Activated CD4-positive, alpha-beta memory T cell treated with anti-CD3 and anti-CD28 coated beads, Interleukin-2, amount 10 ng/mL, durations not matched to agents 7 days and 5 days (primary cell): ENCODE measurements at regions of chr6 and their contacts with region 1.

Region 1: DNA sequence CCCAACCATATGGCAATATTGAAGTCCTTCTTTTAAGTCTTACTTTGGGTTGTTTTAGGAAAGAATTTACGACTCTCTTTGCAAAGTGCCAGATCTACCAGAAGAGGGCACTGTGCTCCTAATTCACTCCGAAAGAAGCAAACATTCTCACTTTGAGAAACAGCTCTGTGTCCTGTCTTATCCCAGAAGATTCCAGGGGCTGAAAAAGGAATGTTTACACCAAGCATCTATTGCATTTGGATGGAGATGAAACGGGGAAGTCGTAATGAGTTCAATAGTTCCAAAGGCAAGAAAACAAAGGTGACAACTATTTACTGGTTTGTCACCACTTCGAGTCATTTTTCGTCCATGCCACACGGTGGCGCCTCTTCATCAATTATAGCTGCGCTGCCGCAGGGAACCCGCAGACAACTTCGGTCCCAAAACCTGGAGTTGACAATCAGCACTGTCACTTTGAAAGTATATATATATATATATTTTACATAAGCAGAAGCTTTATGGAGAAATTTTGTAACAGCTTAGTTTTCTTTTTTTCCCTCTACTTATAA is 121.6 kb downstream of the MOXD1 start:
- DNase-seq: peak; percentile 73
- H3K4me3 Mint-ChIP-seq: peak overlapping the region; percentile 64
- H3K27ac Mint-ChIP-seq: no peak overlapping the region
- H3K4me1 Mint-ChIP-seq: no peaks in the 10 kb centered on the region
- H3K27me3 Mint-ChIP-seq: peaks cover 24% of the 10 kb centered on the region

Region 2: GRCh38 chr6:131914967-131915751 is 364.5 kb before region 1 on chr6:
- CTCF ChIA-PET with region 1: interaction called, 12 read pairs
- POLR2A ChIA-PET with region 1: no interaction called
- DNase-seq: peak; percentile 59
- H3K4me3 Mint-ChIP-seq: no peak overlapping the region
- H3K27ac Mint-ChIP-seq: no peak overlapping the region
- H3K4me1 Mint-ChIP-seq: peaks cover 22% of the 10 kb centered on the region
- H3K27me3 Mint-ChIP-seq: peaks cover 56% of the 10 kb centered on the region

Region 3: GRCh38 chr6:132265451-132266097 is 14.1 kb before region 1 on chr6:
- CTCF ChIA-PET with region 1: interaction called, 54 read pairs
- POLR2A ChIA-PET with region 1: no interaction called
- DNase-seq: no peak
- H3K4me3 Mint-ChIP-seq: no peak overlapping the region
- H3K27ac Mint-ChIP-seq: no peak overlapping the region
- H3K4me1 Mint-ChIP-seq: no peaks in the 10 kb centered on the region
- H3K27me3 Mint-ChIP-seq: peaks cover 8% of the 10 kb centered on the region

Region 4: DNA sequence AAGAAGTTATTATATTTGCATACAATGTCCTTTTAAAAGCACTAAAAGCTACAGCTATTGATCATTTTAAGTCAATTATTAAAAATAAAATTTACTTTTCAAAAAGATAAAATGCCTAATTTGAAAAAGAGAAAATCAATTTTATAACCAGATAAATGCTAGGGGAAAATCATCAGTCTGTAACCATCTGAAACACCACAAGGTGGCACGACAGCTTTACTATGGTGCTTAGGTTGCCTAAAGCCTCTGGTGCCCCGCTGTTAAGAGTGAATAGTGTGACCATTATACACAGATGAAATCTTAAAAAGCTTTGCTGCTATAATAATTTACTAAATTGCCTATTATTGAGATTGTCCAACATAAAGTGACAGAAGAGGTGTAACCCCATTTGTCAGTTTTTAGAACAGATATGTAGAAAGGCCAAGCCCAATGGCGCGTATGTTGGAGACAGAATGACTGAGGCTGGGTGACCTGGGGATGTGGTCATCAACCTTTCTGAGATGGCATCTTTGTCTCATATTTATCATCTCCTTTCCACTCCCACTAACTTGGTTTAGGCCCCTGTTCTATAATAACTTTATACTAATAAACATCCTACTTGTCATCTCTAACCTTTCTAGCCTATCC is 20.8 kb after region 1 on chr6:
- CTCF ChIA-PET with region 1: interaction called, 112 read pairs
- POLR2A ChIA-PET with region 1: interaction called, 6 read pairs
- DNase-seq: no peak
- H3K4me3 Mint-ChIP-seq: no peak overlapping the region
- H3K27ac Mint-ChIP-seq: no peak overlapping the region
- H3K4me1 Mint-ChIP-seq: no peaks in the 10 kb centered on the region
- H3K27me3 Mint-ChIP-seq: peaks cover 19% of the 10 kb centered on the region

Region 5: GRCh38 chr6:132483779-132484679 is 204.4 kb after region 1 on chr6:
- CTCF ChIA-PET with region 1: interaction called, 161 read pairs
- POLR2A ChIA-PET with region 1: no interaction called
- DNase-seq: peak; percentile 33
- H3K4me3 Mint-ChIP-seq: no peak overlapping the region
- H3K27ac Mint-ChIP-seq: no peak overlapping the region
- H3K4me1 Mint-ChIP-seq: peaks cover 22% of the 10 kb centered on the region
- H3K27me3 Mint-ChIP-seq: no peaks in the 10 kb centered on the region

Region 6: DNA sequence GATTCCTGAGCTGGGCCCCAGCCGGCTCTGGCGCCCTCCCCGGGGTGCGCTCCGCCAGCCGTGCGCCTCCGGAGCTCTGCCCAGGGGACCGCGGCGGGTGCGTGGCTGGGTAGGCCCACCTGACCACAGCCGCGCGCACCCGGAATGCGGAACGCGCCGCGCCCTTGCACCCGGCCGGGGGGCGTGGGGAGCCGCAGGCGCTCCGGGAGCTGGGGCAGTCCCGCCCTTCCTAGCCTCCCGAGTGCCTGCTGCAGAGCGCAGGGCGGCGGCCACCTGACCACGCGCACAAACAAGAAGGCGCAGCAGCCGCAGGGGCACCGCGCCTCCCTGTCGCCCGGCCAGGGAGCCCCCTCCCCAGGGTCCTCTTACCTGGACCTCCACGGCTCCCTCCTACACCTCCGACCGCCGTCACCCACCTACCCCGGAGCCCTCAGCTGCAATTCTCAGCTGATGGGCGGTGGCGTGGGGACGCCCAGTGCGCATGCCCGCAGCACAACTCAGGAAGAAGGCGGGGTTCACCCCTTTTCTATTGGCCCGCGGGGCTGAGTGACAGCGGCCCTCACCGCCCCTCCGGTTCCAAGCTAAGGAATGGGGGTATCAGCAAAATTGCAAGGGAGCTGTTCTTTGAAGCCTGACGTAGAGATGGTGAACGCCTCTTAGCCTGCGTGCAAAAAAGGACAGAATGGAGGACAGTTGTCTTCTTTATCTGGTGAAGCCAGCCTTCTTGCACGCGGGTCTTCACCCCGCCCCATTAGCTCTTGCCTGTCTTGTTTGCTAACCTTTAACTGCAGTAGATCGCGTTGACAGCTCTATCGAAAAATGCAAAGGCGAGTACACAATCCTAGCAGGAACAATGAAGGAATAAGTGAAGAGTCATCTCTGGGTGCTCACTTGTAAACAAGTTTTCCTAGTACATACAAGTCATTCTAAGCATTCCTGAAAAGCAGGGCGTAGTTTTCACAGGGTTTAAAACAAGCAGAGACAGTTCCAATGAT is 233.3 kb after region 1 on chr6 and contains the start of gene STX7:
- CTCF ChIA-PET with region 1: interaction called, 16 read pairs
- POLR2A ChIA-PET with region 1: interaction called, 4 read pairs
- DNase-seq: peak; percentile 87
- H3K4me3 Mint-ChIP-seq: peak within 1 kb of the TSS; percentile 95
- H3K27ac Mint-ChIP-seq: peak within 1 kb of the TSS; percentile 82
- H3K4me1 Mint-ChIP-seq: peaks cover 27% of the 10 kb centered on the region
- H3K27me3 Mint-ChIP-seq: peaks cover 18% of the 10 kb centered on the region
- total RNA-seq, gene STX7: 19.9 to 20.2 TPM

Region 7: DNA sequence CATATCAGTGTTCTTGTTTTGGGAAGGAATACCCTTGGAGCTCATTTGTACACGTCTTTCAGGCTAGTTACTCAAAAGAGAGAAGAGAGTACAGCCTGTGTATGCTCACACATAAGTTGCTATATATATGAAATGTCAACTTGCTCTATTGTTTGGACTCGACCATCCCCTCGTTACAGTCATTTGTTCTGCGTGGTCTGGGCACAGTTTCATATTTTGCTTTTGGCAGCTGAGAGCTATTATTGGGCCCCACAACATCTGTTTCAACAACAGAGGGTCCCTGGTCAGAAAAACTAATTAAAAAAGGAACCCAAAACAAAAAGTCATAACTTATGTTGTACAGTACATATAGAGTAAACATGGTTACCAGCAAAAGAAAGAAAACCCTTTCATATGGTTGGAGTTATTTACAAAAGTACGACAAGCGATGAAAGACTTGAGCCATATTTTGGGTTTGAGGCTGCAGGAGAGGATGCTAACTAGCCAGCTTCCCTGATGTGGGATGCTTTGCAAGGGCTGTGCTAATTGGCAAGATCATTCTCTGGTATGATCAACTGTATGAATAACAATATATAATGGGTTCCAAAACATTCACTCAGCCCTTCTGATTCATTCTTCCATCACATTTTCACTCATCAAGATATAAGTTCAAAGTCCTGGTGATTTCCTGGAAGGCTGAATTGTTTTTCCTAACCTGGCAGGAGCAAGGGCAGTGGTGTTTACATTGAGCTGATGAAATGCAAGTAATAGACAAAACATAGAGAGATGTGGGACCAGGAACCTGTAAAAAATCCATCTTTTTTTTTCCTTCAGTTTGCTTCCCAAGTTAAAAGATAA is 672.6 kb after region 1 on chr6:
- CTCF ChIA-PET with region 1: no interaction called
- POLR2A ChIA-PET with region 1: no interaction called
- DNase-seq: no peak
- H3K4me3 Mint-ChIP-seq: no peak overlapping the region
- H3K27ac Mint-ChIP-seq: no peak overlapping the region
- H3K4me1 Mint-ChIP-seq: no peaks in the 10 kb centered on the region
- H3K27me3 Mint-ChIP-seq: peaks cover 36% of the 10 kb centered on the region